ENCODE measurements at regions of chr19 and their contacts with region 1.

Region 1: GRCh38 chr19:14136509-14137281 is at the start of gene ASF1B:
- DNase-seq: peak; percentile 99
- H3K4me3 ChIP-seq: peak within 1 kb of the TSS; percentile 93
- H3K27me3 ChIP-seq: no peaks in the 10 kb centered on the region
- CTCF ChIP-seq: peak; percentile 66
- polyA plus RNA-seq, gene ASF1B: 8.2 and 11.1 TPM in 2 replicates

Region 2: GRCh38 chr19:14015524-14016035 is 121.1 kb before region 1 on chr19:
- CTCF ChIA-PET with region 1: no interaction called
- POLR2A ChIA-PET with region 1: no interaction called
- DNase-seq: no peak
- H3K4me3 ChIP-seq: no peak overlapping the region
- H3K27me3 ChIP-seq: no peaks in the 10 kb centered on the region
- CTCF ChIP-seq: no peak

Region 3: GRCh38 chr19:14031719-14032480 is 104.8 kb before region 1 on chr19 and contains the start of gene IL27RA:
- CTCF ChIA-PET with region 1: no interaction called
- POLR2A ChIA-PET with region 1: no interaction called
- DNase-seq: no peak
- H3K4me3 ChIP-seq: peak within 1 kb of the TSS; percentile 61
- H3K27me3 ChIP-seq: peaks cover 6% of the 10 kb centered on the region
- CTCF ChIP-seq: peak; percentile 87
- polyA plus RNA-seq, gene IL27RA: 4.4 and 6.6 TPM in 2 replicates

Region 4: DNA sequence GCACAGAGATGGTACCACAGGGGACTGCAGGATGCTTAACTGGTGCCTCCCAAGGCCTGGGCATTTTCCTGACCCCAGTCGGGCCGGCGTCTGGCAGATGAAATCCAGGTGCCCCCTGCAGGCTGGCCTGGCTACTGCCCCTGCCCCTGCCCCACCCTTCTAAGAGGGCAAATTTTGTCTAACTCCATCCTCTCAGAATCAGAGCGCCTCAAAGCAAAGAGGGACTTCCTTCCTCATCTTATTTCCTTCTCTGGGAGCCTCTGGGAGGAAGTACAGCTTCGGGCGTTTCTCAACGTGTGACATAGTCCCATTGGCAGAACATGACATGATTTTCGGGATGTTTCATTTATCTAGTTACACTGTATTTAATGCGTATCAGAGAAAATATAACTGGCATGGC is 21.8 kb before region 1 on chr19:
- CTCF ChIA-PET with region 1: interaction called, 11 read pairs
- POLR2A ChIA-PET with region 1: no interaction called
- DNase-seq: no peak
- H3K4me3 ChIP-seq: no peak overlapping the region
- H3K27me3 ChIP-seq: no peaks in the 10 kb centered on the region
- CTCF ChIP-seq: peak; percentile 61

Region 5: GRCh38 chr19:14147797-14148605 is 11.3 kb after region 1 on chr19:
- CTCF ChIA-PET with region 1: interaction called, 21 read pairs
- POLR2A ChIA-PET with region 1: no interaction called
- DNase-seq: no peak
- H3K4me3 ChIP-seq: no peak overlapping the region
- H3K27me3 ChIP-seq: no peaks in the 10 kb centered on the region
- CTCF ChIP-seq: peak; percentile 95

Region 6: DNA sequence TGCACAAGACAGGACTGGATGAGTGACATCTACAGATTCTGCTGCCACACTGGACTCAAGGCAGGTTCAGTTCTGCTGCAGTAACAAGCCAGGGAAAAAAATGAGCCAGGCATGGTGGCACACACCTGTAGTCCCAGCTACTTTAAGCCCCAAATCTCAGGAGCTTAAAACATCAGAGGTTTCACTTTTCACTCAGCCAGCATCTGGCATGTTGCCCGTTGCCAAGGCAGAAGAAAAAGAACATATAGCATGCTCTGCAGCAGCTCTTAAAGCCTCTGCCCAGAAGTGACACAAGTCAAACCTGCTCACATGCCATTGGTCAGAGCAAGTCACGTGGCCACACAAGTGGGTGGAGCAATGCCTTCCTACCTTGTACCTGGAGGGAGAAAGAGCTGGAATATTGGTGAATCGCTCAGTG is 229.8 kb after region 1 on chr19:
- CTCF ChIA-PET with region 1: interaction called, 11 read pairs
- POLR2A ChIA-PET with region 1: no interaction called
- DNase-seq: no peak
- H3K4me3 ChIP-seq: no peak overlapping the region
- H3K27me3 ChIP-seq: no peaks in the 10 kb centered on the region
- CTCF ChIP-seq: no peak